IMR-90 (cell line): ENCODE measurements at regions of chr16 and their contacts with region 1.

Region 1: DNA sequence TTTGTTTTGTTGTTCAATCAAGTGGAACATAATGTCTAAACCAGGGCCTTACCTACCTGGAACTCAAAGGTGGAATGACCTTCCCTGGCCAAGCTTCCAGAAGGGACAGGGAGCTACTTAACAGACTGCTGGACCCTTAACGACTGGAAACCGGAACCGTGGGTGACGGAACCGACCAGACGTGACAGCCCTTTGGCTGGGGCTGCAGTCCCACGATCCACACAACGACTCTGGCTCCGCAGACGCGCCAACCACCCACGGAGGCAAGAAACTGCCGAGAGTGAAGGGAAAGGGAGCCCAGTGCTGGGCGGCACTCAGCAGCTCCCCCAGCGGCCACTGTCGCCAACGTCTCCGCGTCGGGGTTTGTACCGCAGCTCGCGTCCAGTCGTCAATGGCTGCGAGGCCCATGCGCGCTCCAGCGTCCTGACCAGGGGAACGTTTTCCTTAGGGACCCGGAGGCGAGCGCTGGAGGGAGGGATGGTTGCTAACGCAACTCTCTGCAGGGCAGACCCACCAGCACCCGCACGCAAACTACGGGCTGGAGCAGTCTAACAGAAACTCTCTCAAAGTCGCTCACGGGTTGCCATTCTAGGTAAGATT is 5.5 kb upstream of the KIF22 start:
- DNase-seq: peak; percentile 22
- ATAC-seq: peak; percentile 94
- H3K4me3 ChIP-seq: peak overlapping the region; percentile 12; the same call in 1 of the 2 replicates
- H3K27ac ChIP-seq: no peak overlapping the region
- H3K4me1 ChIP-seq: peaks cover 4% of the 10 kb centered on the region
- H3K27me3 ChIP-seq: peaks cover 21% of the 10 kb centered on the region
- CTCF ChIP-seq: peak; percentile 61
- POLR2A ChIP-seq: no peak
- RAD21 ChIP-seq: peak; percentile 26; the same call in 1 of the 2 replicates

Region 2: DNA sequence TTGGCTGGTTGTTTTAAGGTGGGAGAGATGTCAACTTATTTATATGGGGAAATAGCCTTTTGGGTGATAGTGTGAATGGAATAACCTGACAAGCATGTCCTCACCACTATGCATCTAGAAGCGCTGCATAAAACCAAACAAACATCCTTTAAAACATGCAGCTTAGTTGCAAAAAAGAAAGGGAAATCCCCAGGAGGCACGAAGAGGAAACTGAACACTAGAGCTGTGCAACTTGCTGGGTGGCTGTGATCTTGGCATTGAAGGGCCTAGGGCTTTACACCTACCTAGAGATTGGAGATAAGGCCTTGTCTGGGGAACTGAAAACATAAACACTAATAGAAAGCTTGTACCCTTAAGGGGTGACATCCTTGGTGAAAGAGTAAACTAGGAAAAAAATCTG is 46.5 kb before region 1 on chr16:
- CTCF ChIA-PET with region 1: no interaction called
- POLR2A ChIA-PET with region 1: no interaction called
- dilution Hi-C with region 1: no loop called
- in situ Hi-C with region 1: no loop called
- intact Hi-C with region 1: loop called (anchors 10 kb)
- DNase-seq: no peak
- ATAC-seq: no peak
- H3K4me3 ChIP-seq: no peak overlapping the region
- H3K27ac ChIP-seq: no peak overlapping the region
- H3K4me1 ChIP-seq: no peaks in the 10 kb centered on the region
- H3K27me3 ChIP-seq: peaks cover 31% of the 10 kb centered on the region
- CTCF ChIP-seq: no peak
- POLR2A ChIP-seq: no peak
- RAD21 ChIP-seq: no peak